ENCODE measurements at regions of chr2 and their contacts with region 1.

Region 1: GRCh38 chr2:36394804-36395203 is 39.2 kb downstream of the CRIM1 start:
- DNase-seq: no peak
- H3K4me3 ChIP-seq: no peak overlapping the region
- H3K27ac ChIP-seq: no peak overlapping the region
- H3K27me3 ChIP-seq: no peaks in the 10 kb centered on the region
- CTCF ChIP-seq: no peak

Region 2: DNA sequence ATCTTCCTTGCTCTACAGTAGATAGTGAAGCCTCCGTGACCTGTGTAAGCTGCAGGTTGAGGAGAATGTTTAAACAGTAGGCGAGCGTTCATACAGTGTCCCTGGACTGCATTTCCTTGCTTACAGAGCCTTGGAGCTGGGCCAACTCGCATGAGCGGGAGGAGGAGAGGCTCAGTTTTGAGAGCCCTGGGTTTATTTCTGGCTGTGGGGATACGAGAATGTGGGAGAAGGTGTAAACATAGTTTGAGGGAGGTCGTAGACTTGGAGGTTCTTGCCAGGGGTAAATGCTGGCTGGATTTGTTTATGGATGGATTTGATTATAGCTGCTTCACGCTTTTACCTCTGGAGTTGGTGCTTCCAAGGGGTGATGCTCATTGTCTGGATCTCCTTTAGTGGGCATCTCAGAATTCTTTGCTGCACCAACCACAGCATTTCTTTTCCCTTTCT is 18.5 kb before region 1 on chr2:
- CTCF ChIA-PET with region 1: no interaction called
- POLR2A ChIA-PET with region 1: no interaction called
- DNase-seq: no peak
- H3K4me3 ChIP-seq: no peak overlapping the region
- H3K27ac ChIP-seq: no peak overlapping the region
- H3K27me3 ChIP-seq: no peaks in the 10 kb centered on the region
- CTCF ChIP-seq: no peak

Region 3: DNA sequence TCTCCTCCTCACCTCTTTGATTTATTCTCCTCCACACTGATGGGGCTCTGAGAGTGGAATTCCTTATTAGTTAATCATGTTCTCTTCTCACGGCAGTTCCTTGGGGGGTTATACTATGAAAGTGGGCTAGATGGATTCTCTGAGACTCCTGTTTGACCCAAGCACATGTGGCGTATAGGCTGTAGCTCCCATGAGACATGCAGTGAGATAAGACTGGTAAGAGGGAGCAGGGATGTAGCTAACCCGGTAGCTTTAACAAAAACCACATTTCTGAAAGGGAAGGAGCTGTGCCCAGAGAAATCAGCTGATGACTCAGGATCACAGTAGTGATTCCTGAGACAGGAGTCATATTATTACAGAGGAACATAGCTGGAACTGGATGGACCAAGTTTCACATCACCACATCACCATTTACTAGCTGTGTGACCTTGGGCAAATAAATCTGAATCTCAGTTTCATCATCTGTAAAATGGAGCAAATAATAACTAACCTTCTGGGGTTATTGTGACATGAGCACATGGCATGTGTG is 43.7 kb after region 1 on chr2:
- CTCF ChIA-PET with region 1: interaction called, 3 read pairs
- POLR2A ChIA-PET with region 1: interaction called, 10 read pairs
- DNase-seq: peak; percentile 92
- H3K4me3 ChIP-seq: no peak overlapping the region
- H3K27ac ChIP-seq: peak overlapping the region; percentile 89
- H3K27me3 ChIP-seq: no peaks in the 10 kb centered on the region
- CTCF ChIP-seq: no peak

Measured in AG04450 (cell line).